ENCODE measurements at regions of chr17 and their contacts with region 1.

Region 1: GRCh38 chr17:59964482-59965328 is at the start of gene RNFT1:
- DNase-seq: peak; percentile 93
- H3K4me3 Mint-ChIP-seq: peak within 1 kb of the TSS; percentile 75
- H3K27ac Mint-ChIP-seq: peak within 1 kb of the TSS; percentile 85
- H3K4me1 Mint-ChIP-seq: peaks cover 17% of the 10 kb centered on the region
- H3K27me3 Mint-ChIP-seq: no peaks in the 10 kb centered on the region
- total RNA-seq, gene RNFT1: 34.7 to 35.5 TPM

Region 2: DNA sequence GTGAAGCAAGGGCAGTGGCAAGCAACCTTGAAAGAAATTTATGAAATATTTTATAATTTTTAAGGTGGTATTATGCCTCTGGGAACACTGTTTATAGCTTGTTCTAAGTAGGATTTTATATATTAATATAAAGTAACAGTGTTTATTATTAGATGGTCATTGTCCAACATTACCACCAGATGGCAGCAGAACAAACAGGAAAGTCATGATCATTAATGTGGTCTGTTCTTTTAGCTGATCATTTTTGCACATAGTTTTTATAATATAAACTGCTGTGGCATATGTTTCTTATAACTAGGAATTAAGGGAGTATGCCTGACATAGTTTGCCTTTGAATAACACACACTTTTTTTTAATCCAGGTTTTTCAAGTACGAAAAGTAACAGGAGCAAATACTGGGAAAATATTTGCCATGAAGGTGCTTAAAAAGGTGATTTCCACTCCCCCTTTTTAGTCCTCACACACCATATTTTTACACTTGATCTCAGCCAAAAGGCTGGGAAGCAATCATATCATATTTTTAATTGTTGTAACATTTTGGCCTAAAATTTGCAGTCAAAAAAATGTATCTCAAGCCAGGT is 50.3 kb before region 1 on chr17:
- CTCF ChIA-PET with region 1: interaction called, 6 read pairs
- POLR2A ChIA-PET with region 1: no interaction called
- intact Hi-C with region 1: loop called (anchors 5 kb)
- DNase-seq: no peak
- H3K4me3 Mint-ChIP-seq: no peak overlapping the region
- H3K27ac Mint-ChIP-seq: no peak overlapping the region
- H3K4me1 Mint-ChIP-seq: no peaks in the 10 kb centered on the region
- H3K27me3 Mint-ChIP-seq: no peaks in the 10 kb centered on the region

Region 3: DNA sequence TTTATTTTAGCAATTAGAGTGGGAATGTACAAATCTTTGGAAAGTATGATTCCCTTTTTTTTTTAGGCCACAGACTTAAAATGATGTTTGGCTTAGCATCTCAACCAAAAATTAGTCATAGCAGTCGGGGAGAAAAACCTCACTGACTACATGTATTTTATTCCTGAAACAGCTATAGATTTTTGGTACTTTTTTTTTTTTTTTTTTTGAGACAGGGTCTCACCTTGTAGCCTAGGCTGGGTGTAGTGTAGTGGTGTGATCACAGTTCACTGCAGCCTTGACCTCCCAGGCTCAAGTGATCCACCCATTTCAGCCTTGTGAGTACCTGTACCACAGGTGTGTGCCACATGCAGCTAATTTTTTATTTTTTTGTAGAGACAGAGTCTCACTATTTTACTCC is 23.6 kb before region 1 on chr17:
- CTCF ChIA-PET with region 1: no interaction called
- POLR2A ChIA-PET with region 1: interaction called, 8 read pairs
- intact Hi-C with region 1: loop called (anchors 1 kb)
- DNase-seq: peak; percentile 20
- H3K4me3 Mint-ChIP-seq: no peak overlapping the region
- H3K27ac Mint-ChIP-seq: peak overlapping the region; percentile 91
- H3K4me1 Mint-ChIP-seq: peaks cover 40% of the 10 kb centered on the region
- H3K27me3 Mint-ChIP-seq: no peaks in the 10 kb centered on the region

Measured in activated CD4-positive, alpha-beta memory T cell treated with anti-CD3 and anti-CD28 coated beads for 36 hours (primary cell).